BJ (cell line): ENCODE measurements at regions of chr6 and their contacts with region 1.

Region 1: DNA sequence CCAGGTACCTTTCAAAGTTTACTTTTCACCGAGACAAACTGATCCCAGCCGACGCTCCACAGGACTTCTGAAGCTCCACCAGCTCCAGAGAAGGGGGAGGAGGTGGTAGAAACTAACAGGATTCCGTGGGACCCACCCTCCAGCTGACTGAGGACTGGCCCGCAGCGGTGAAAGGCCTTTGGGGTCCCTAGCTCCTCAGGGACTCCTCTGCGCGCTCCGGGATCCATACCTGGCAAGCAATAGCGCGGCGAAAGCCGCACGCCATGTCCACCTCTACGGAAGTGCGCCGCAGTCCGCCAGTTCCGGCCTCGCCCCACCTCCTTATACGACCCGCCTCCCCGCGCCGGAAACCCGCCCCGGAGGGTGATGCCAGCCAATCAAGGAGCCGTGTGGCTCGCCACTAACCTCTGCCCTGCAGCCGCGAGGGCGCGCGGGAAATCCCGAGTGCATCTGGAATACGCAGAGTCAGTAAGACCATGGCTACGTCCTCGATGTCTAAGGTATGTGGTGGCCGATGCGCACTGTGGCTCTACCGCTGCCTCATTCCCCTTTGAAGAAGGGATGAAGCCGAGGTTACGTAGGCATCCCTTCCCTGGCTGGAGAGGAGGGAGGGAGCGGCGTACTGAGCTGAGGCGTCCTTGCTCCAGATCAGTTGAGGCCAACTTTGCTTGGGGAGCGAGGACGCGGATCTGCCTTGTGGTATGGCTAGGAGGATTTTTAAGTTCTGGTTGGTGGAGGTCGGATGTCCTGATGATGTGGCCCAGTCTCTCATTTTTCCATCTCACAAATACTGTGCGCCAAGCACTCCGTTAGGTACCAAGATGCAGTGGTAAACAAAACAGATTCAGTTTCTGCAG is at the starts of genes ORC3 and RARS2:
- DNase-seq: peak; percentile 70
- H3K4me3 ChIP-seq: peak within 1 kb of the TSS; percentile 71
- H3K27me3 ChIP-seq: no peaks in the 10 kb centered on the region
- CTCF ChIP-seq: no peak
- polyA plus RNA-seq, gene ORC3: 17.3 and 35.5 TPM in 2 replicates
- polyA plus RNA-seq, gene RARS2: 12.4 and 25.5 TPM in 2 replicates

Region 2: GRCh38 chr6:87436435-87436834 is 153.5 kb before region 1 on chr6:
- CTCF ChIA-PET with region 1: no interaction called
- POLR2A ChIA-PET with region 1: no interaction called
- DNase-seq: peak; percentile 11
- H3K4me3 ChIP-seq: no peak overlapping the region
- H3K27me3 ChIP-seq: no peaks in the 10 kb centered on the region
- CTCF ChIP-seq: no peak

Region 3: DNA sequence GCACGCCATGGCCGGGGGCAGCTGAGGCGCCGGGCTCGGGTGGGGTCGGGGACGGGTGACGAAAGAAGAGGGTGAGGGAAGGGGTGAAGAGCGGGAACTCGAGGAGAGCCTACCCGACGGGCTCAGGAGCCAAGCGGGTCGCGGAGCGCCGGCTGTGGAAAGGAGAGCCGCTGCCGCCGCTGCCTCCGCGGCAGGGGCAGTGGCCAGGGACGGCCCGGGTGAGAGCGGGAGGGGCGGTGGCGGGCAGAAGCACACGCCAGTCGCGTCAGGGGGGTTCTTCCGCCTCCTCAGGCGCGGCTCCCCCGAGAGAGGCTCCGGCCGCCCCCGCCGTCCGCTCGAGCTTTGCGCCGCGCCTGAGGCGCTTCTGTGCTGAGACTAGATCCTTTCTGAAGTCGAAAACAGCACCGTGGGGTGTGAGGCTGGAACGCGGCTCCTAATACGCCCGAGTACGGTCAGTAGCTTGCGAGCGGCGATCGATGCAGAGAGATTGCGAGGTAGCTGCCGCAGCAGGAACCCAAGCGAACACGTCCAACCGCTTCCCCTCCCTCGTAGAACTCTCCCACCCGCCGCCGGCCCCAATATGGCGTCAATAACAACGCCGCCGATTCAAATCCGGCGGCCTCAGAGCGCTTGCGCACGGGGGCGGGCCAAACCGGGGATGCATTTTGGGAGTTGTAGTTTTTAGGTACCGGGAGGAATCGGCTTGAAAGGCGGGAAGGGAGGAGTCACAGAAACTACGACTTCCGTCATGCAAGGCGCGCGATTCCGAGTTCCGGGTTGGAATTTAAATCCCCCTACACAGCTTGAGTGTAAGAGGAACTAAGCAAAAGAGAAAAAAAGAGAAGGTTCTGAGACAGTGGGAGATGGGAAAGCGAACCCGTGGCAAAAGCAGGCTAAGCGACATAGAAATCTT is 112.0 kb after region 1 on chr6 and contains the start of gene AKIRIN2:
- CTCF ChIA-PET with region 1: interaction called, 3 read pairs
- POLR2A ChIA-PET with region 1: interaction called, 13 read pairs
- DNase-seq: peak; percentile 97
- H3K4me3 ChIP-seq: peak within 1 kb of the TSS; percentile 81
- H3K27me3 ChIP-seq: no peaks in the 10 kb centered on the region
- CTCF ChIP-seq: no peak
- polyA plus RNA-seq, gene AKIRIN2: 8.1 and 15.1 TPM in 2 replicates